ENCODE measurements at regions of chr22 and their contacts with region 1.

Region 1: GRCh38 chr22:17119481-17120202 is 1.5 kb downstream of the TMEM121B start:
- DNase-seq: peak in 2 of 14 experiments; percentile 45 to 50
- ATAC-seq: no peak
- H3K4me3 ChIP-seq: no peak overlapping the region
- H3K4me3 Mint-ChIP-seq: peak overlapping the region; percentile 72
- H3K27ac ChIP-seq: no peak overlapping the region
- H3K27ac Mint-ChIP-seq: no peak overlapping the region
- H3K4me1 ChIP-seq: peaks cover 65% of the 10 kb centered on the region
- H3K4me1 Mint-ChIP-seq: peaks cover 53% of the 10 kb centered on the region
- H3K27me3 ChIP-seq: peaks cover 17 to 19% of the 10 kb centered on the region in 2 experiments
- H3K27me3 Mint-ChIP-seq: peaks cover 17% of the 10 kb centered on the region
- CTCF ChIP-seq: no peak

Region 2: GRCh38 chr22:17106785-17107546 is 12.7 kb before region 1 on chr22:
- CTCF ChIA-PET with region 1: interaction called, 7 read pairs
- POLR2A ChIA-PET with region 1: interaction called, 21 read pairs
- intact Hi-C with region 1: no loop called
- DNase-seq: peak in 5 of 14 experiments; percentile 26 to 56 (median 46)
- ATAC-seq: peak; percentile 74
- H3K4me3 ChIP-seq: peak overlapping the region; percentile 11
- H3K4me3 Mint-ChIP-seq: peak overlapping the region; percentile 82
- H3K27ac ChIP-seq: peak overlapping the region; percentile 36 to 66
- H3K27ac Mint-ChIP-seq: peak overlapping the region; percentile 90
- H3K4me1 ChIP-seq: peaks cover 48% of the 10 kb centered on the region
- H3K4me1 Mint-ChIP-seq: peaks cover 65% of the 10 kb centered on the region
- H3K27me3 ChIP-seq: no peaks in the 10 kb centered on the region
- H3K27me3 Mint-ChIP-seq: no peaks in the 10 kb centered on the region
- CTCF ChIP-seq: no peak

Region 3: GRCh38 chr22:17158568-17159503 is 39.2 kb after region 1 on chr22 and contains the start of gene HDHD5:
- CTCF ChIA-PET with region 1: no interaction called
- POLR2A ChIA-PET with region 1: no interaction called
- intact Hi-C with region 1: loop called (anchors 5 kb)
- DNase-seq: peak; percentile 82 to 96 (median 88)
- ATAC-seq: peak; percentile 92
- H3K4me3 ChIP-seq: peak within 1 kb of the TSS; percentile 85
- H3K4me3 Mint-ChIP-seq: peak within 1 kb of the TSS; percentile 82
- H3K27ac ChIP-seq: peak within 1 kb of the TSS; percentile 41 to 65
- H3K27ac Mint-ChIP-seq: peak within 1 kb of the TSS; percentile 58
- H3K4me1 ChIP-seq: peaks cover 39% of the 10 kb centered on the region
- H3K4me1 Mint-ChIP-seq: peaks cover 37% of the 10 kb centered on the region
- H3K27me3 ChIP-seq: no peaks in the 10 kb centered on the region
- H3K27me3 Mint-ChIP-seq: no peaks in the 10 kb centered on the region
- CTCF ChIP-seq: no peak
- total RNA-seq, gene HDHD5: 11.0 to 11.6 TPM

Measured in CD4-positive, alpha-beta T cell (primary cell).